ENCODE measurements at regions of chr4 and their contacts with region 1.

Region 1: DNA sequence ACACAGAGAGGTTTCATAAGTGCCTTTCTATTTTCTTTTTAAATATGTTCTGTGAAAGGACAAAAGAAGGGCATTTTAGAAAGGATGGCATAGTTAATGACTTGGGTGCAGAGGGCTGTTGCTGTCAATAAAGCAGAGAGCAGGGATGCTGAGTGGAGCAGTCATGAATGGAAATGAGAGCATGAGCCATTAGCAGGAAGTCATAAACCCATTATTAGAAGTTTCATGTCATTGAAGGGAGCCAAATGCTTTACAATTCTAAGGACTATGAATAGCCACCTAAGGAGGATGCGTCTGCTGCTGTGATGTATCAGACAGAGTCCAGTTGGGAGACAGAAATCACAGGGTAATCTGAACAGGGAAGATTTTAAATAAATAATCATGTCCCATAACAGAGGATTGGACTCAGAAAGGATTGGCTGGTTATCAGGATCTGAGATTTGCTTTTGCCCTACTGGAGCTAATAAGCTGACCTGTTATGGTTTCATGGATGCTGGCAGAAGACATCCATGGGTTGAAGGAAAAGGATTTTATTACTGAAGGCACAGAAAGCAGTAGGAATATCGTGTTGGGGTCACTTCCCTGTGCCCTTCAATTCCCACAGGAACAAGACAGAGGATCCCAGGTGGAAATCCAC is 47.5 kb upstream of the WDR19 start:
- DNase-seq: no peak
- H3K4me3 ChIP-seq: no peak overlapping the region
- H3K27ac ChIP-seq: no peak overlapping the region
- H3K4me1 ChIP-seq: no peaks in the 10 kb centered on the region
- H3K27me3 ChIP-seq: no peaks in the 10 kb centered on the region
- CTCF ChIP-seq: no peak
- EP300 ChIP-seq: no peak
- POLR2A ChIP-seq: no peak

Region 2: DNA sequence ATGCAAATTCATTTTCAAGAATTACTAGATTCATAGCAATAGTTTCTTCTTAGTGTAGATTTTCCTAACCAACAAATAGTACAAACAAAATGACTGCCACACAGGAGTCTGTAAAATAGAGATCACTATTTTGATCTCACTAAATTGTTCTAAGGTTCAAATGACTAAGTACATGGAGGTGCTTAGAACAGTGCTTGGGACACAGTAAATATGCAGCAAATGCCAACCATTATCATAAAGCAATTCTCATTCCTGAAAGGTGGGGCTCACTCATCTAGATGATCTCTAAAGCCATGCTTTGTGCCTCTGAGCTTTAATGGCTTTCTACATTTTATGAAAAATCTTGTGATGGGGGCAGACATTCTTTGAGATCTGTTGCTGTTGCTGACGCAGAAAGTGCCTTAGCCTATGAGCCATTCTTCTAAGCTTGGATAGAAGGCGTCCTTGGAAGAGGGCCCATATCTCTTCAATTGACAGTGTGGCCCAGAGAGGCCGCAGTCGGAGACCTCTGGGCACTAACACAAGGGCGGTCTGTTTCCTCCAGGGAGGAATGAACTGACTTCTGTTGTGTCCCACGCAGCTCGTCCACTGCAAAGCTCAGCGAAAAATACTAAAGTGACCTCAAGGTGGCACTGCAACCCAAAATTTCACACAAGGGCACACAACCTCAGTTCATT is 375.6 kb before region 1 on chr4:
- intact Hi-C with region 1: loop called in 3 of 4 experiments (anchors 5 to 10 kb)
- DNase-seq: peak; percentile 57 to 79 (median 70)
- H3K4me3 ChIP-seq: no peak overlapping the region
- H3K27ac ChIP-seq: peak overlapping the region in 1 of 2 donors; percentile 50
- H3K4me1 ChIP-seq: no peaks in the 10 kb centered on the region
- H3K27me3 ChIP-seq: no peaks in the 10 kb centered on the region
- CTCF ChIP-seq: peak in 2 of 3 donors; percentile 73 to 78
- EP300 ChIP-seq: no peak
- POLR2A ChIP-seq: no peak

Region 3: GRCh38 chr4:38768968-38769394 is 365.8 kb before region 1 on chr4:
- intact Hi-C with region 1: loop called in 2 of 4 experiments (anchors 5 to 10 kb)
- DNase-seq: no peak
- H3K4me3 ChIP-seq: no peak overlapping the region
- H3K27ac ChIP-seq: no peak overlapping the region
- H3K4me1 ChIP-seq: no peaks in the 10 kb centered on the region
- H3K27me3 ChIP-seq: no peaks in the 10 kb centered on the region
- CTCF ChIP-seq: no peak
- EP300 ChIP-seq: no peak
- POLR2A ChIP-seq: no peak

Region 4: DNA sequence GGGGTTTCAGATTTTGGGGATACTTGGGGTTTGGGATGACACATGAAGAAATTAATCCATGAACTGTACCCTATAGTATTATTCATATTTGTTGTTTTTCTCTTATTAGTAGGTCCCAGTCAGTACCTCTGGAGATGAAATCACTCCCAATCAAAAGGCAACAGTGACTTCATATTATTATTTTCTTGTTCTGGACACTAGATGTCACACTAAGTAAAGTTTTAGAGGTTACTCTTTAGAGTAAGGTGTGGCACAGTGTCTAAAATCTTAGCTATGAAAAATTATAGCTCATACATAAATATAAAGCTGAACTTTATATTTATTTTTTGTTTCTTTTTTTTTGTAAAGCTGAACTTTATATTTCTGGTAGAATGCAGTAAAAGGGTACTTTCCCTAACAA is 232.1 kb before region 1 on chr4:
- intact Hi-C with region 1: loop called in 3 of 4 experiments (anchors 5 to 10 kb)
- DNase-seq: no peak
- H3K4me3 ChIP-seq: no peak overlapping the region
- H3K27ac ChIP-seq: no peak overlapping the region
- H3K4me1 ChIP-seq: peaks cover 19% of the 10 kb centered on the region
- H3K27me3 ChIP-seq: no peaks in the 10 kb centered on the region
- CTCF ChIP-seq: no peak
- EP300 ChIP-seq: no peak
- POLR2A ChIP-seq: no peak

Measured in ovary (tissue), 10 donors.